PC-3 (cell line): ENCODE measurements at regions of chr18 and their contacts with region 1.

Region 1: DNA sequence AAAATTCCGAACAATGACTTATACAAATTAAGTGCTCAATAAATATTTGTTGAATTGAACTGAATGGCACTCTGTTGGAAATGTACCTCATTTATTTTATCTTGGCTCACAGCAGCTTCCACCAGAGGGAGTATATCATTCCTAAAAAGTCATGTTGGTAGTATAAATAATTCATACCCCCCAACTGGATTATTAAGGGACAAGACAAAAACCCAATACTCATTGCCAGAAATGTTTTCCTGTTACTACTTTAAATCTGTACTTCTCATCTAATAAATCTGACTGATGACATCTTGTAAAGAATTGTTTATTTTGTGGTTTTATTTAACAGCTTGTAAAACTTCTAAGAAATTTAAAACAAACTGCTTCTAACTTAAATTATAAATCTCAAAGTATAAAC is 163.9 kb downstream of the CDH2 start:
- DNase-seq: peak; percentile 52
- ATAC-seq: peak; percentile 48
- H3K4me3 ChIP-seq: no peak overlapping the region
- H3K27ac ChIP-seq: no peak overlapping the region
- H3K4me1 ChIP-seq: peaks cover 14% of the 10 kb centered on the region
- H3K27me3 ChIP-seq: no peaks in the 10 kb centered on the region
- CTCF ChIP-seq: peak; percentile 64

Region 2: DNA sequence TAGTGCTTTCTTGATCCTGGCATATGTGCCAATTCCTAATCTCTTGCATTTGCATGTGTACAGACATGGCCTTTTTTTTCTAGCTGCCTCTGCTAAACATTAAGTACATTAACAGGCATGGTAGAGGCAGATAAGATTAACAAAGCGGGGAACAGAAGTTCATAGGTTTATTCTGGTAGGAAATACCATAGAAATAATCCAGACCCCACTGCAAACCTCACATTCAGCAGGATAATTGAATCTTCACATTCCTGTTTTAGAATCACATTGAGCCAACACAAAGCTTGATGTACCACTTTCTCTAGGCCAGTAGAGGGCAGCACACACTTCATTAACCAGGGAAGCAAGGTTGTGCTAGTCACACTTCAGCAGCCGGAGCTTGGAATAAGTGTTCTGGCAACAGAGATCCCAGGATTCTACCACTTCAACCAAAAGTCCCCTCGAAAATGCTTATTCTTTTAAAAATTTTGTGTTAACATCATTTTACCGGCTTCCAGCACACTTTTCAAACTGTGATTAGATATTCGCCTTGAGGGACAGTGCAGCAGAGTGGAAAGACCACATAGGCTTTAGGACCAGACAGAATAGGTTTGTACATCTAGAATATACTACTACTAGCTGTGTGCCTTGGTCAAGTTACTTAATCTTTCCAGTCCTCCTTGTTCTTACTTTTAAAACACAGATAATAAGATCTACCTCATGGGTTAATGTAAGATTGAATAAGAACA is 407.8 kb before region 1 on chr18:
- CTCF ChIA-PET with region 1: interaction called, 3 read pairs
- POLR2A ChIA-PET with region 1: no interaction called
- intact Hi-C with region 1: loop called (anchors 10 kb)
- DNase-seq: peak; percentile 83
- ATAC-seq: peak; percentile 93
- H3K4me3 ChIP-seq: no peak overlapping the region
- H3K27ac ChIP-seq: no peak overlapping the region
- H3K4me1 ChIP-seq: peaks cover 11% of the 10 kb centered on the region
- H3K27me3 ChIP-seq: no peaks in the 10 kb centered on the region
- CTCF ChIP-seq: peak; percentile 87

Region 3: GRCh38 chr18:27685807-27686412 is 327.2 kb before region 1 on chr18:
- CTCF ChIA-PET with region 1: no interaction called
- POLR2A ChIA-PET with region 1: no interaction called
- intact Hi-C with region 1: loop called (anchors 10 kb)
- DNase-seq: peak; percentile 69
- ATAC-seq: peak; percentile 27; the same call in 1 of the 2 replicates
- H3K4me3 ChIP-seq: no peak overlapping the region
- H3K27ac ChIP-seq: no peak overlapping the region
- H3K4me1 ChIP-seq: no peaks in the 10 kb centered on the region
- H3K27me3 ChIP-seq: no peaks in the 10 kb centered on the region
- CTCF ChIP-seq: peak; percentile 91

Region 4: GRCh38 chr18:27746241-27746640 is 266.8 kb before region 1 on chr18:
- CTCF ChIA-PET with region 1: no interaction called
- POLR2A ChIA-PET with region 1: no interaction called
- intact Hi-C with region 1: no loop called
- DNase-seq: no peak
- ATAC-seq: no peak
- H3K4me3 ChIP-seq: no peak overlapping the region
- H3K27ac ChIP-seq: no peak overlapping the region
- H3K4me1 ChIP-seq: no peaks in the 10 kb centered on the region
- H3K27me3 ChIP-seq: no peaks in the 10 kb centered on the region
- CTCF ChIP-seq: no peak

Region 5: GRCh38 chr18:27778441-27778840 is 234.6 kb before region 1 on chr18:
- CTCF ChIA-PET with region 1: no interaction called
- POLR2A ChIA-PET with region 1: no interaction called
- intact Hi-C with region 1: loop called (anchors 5 kb)
- DNase-seq: peak; percentile 52
- ATAC-seq: peak; percentile 64
- H3K4me3 ChIP-seq: no peak overlapping the region
- H3K27ac ChIP-seq: no peak overlapping the region
- H3K4me1 ChIP-seq: no peaks in the 10 kb centered on the region
- H3K27me3 ChIP-seq: no peaks in the 10 kb centered on the region
- CTCF ChIP-seq: peak; percentile 73

Region 6: GRCh38 chr18:27871726-27872125 is 141.3 kb before region 1 on chr18:
- CTCF ChIA-PET with region 1: no interaction called
- POLR2A ChIA-PET with region 1: no interaction called
- intact Hi-C with region 1: loop called (anchors 2 kb)
- DNase-seq: no peak
- ATAC-seq: no peak
- H3K4me3 ChIP-seq: no peak overlapping the region
- H3K27ac ChIP-seq: no peak overlapping the region
- H3K4me1 ChIP-seq: no peaks in the 10 kb centered on the region
- H3K27me3 ChIP-seq: no peaks in the 10 kb centered on the region
- CTCF ChIP-seq: no peak

Region 7: GRCh38 chr18:28065031-28065792 is 52.1 kb after region 1 on chr18:
- CTCF ChIA-PET with region 1: no interaction called
- POLR2A ChIA-PET with region 1: no interaction called
- intact Hi-C with region 1: no loop called
- DNase-seq: peak; percentile 54
- ATAC-seq: no peak
- H3K4me3 ChIP-seq: no peak overlapping the region
- H3K27ac ChIP-seq: no peak overlapping the region
- H3K4me1 ChIP-seq: 0 out of 2 replicates have a peak, but pooled peaks cover 5% of the 10 kb centered on the region
- H3K27me3 ChIP-seq: no peaks in the 10 kb centered on the region
- CTCF ChIP-seq: no peak